Endothelial cell of umbilical vein (primary cell): ENCODE measurements at regions of chr22 and their contacts with region 1.

Region 1: DNA sequence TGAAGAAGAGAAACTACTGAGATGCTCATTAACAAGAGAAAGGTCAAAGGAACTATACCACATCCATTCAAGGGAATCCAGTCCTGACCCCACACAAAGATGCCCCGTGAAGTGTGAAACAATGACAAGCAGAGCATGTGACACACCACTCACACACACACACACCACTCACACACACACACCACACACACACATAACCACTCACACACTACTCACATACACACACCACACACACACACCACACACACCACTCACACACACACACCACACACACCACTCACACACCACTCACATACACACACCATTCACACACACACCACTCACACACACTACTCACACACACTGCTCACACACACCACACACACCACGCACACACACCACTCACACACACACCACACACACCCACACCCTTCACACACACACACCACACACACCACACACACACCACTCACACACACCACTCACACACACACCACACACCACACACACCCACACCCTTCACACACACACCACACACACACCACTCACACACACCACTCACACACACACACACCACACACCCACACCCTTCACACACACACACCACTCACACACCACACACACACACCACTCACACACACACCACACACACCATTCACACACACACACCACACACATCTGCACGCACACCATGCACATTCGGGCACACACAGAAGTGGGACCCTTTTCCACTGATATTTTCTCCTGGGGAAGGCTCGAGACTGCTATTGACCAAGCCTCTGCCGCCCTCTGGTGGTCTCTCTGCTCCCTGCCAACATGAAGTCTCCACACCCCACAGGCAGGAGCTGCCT is 32.0 kb upstream of the COMT start:
- DNase-seq: peak; percentile 77
- H3K4me3 ChIP-seq: no peak overlapping the region
- H3K27ac ChIP-seq: no peak overlapping the region
- H3K4me1 ChIP-seq: peaks cover 3% of the 10 kb centered on the region
- H3K27me3 ChIP-seq: no peaks in the 10 kb centered on the region
- CTCF ChIP-seq: peak; percentile 86 to 88
- POLR2A ChIP-seq: no peak

Region 2: GRCh38 chr22:19723983-19724827 is 185.4 kb before region 1 on chr22:
- CTCF ChIA-PET with region 1: interaction called, 372 read pairs
- POLR2A ChIA-PET with region 1: no interaction called
- dilution Hi-C with region 1: no loop called
- intact Hi-C with region 1: no loop called
- DNase-seq: peak; percentile 70
- H3K4me3 ChIP-seq: peak overlapping the region in 2 of 3 experiments; percentile 16 to 22
- H3K27ac ChIP-seq: no peak overlapping the region
- H3K4me1 ChIP-seq: no peaks in the 10 kb centered on the region
- H3K27me3 ChIP-seq: peaks cover 0 to 2% of the 10 kb centered on the region in 2 experiments
- CTCF ChIP-seq: peak; percentile 57 to 64
- POLR2A ChIP-seq: no peak

Region 3: GRCh38 chr22:19766511-19767426 is 142.8 kb before region 1 on chr22:
- CTCF ChIA-PET with region 1: interaction called, 15 read pairs
- POLR2A ChIA-PET with region 1: no interaction called
- dilution Hi-C with region 1: no loop called
- intact Hi-C with region 1: loop called (anchors 5 kb)
- DNase-seq: no peak
- H3K4me3 ChIP-seq: no peak overlapping the region
- H3K27ac ChIP-seq: no peak overlapping the region
- H3K4me1 ChIP-seq: peaks cover 5% of the 10 kb centered on the region
- H3K27me3 ChIP-seq: peaks cover 11 to 19% of the 10 kb centered on the region in 2 experiments
- CTCF ChIP-seq: peak; percentile 33 to 39
- POLR2A ChIP-seq: no peak

Region 4: DNA sequence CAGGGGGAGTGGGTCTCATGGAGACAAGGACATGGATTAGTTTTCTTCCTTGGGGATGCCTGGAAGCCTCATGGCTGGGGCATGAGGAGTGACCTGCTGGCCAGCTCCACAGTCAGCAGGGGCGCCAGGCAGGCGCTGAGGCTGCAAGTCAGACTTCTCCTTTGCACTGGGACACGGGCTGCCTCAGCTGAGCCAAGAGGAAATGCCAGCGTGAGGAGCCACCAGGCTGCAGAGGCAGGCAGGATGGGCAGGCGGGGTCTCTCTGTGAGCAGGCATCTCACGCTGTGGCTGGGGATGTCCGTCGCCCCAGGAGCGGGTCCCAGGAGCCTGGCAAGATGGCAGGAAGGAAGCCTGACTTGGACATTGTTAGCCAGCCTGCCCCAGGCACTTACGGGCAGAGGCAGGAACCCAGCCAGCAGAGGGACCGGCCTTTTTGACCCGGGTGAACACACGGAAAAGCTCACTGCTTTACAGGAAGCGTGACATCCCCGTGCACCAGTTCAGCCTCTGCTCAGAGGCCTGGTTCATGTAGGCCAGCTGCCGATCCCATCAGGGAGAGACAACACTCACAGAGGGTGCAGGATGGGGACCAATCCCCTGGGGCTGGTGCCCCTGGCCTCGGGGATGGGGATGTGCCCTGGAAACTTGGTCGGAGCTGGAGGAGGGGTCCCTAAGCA is 65.0 kb before region 1 on chr22:
- CTCF ChIA-PET with region 1: interaction called, 11 read pairs
- POLR2A ChIA-PET with region 1: no interaction called
- dilution Hi-C with region 1: no loop called
- intact Hi-C with region 1: no loop called
- DNase-seq: peak; percentile 77
- H3K4me3 ChIP-seq: no peak overlapping the region
- H3K27ac ChIP-seq: peak overlapping the region; percentile 80
- H3K4me1 ChIP-seq: peaks cover 32% of the 10 kb centered on the region
- H3K27me3 ChIP-seq: no peaks in the 10 kb centered on the region
- CTCF ChIP-seq: peak; percentile 17 to 39
- POLR2A ChIP-seq: no peak

Region 5: GRCh38 chr22:19874307-19875060 is 35.1 kb before region 1 on chr22:
- CTCF ChIA-PET with region 1: interaction called, 23 read pairs
- POLR2A ChIA-PET with region 1: no interaction called
- dilution Hi-C with region 1: no loop called
- intact Hi-C with region 1: loop called (anchors 2 kb)
- DNase-seq: peak; percentile 77
- H3K4me3 ChIP-seq: no peak overlapping the region
- H3K27ac ChIP-seq: peak overlapping the region; percentile 77
- H3K4me1 ChIP-seq: peaks cover 54% of the 10 kb centered on the region
- H3K27me3 ChIP-seq: no peaks in the 10 kb centered on the region
- CTCF ChIP-seq: no peak
- POLR2A ChIP-seq: peak; percentile 35

Region 6: DNA sequence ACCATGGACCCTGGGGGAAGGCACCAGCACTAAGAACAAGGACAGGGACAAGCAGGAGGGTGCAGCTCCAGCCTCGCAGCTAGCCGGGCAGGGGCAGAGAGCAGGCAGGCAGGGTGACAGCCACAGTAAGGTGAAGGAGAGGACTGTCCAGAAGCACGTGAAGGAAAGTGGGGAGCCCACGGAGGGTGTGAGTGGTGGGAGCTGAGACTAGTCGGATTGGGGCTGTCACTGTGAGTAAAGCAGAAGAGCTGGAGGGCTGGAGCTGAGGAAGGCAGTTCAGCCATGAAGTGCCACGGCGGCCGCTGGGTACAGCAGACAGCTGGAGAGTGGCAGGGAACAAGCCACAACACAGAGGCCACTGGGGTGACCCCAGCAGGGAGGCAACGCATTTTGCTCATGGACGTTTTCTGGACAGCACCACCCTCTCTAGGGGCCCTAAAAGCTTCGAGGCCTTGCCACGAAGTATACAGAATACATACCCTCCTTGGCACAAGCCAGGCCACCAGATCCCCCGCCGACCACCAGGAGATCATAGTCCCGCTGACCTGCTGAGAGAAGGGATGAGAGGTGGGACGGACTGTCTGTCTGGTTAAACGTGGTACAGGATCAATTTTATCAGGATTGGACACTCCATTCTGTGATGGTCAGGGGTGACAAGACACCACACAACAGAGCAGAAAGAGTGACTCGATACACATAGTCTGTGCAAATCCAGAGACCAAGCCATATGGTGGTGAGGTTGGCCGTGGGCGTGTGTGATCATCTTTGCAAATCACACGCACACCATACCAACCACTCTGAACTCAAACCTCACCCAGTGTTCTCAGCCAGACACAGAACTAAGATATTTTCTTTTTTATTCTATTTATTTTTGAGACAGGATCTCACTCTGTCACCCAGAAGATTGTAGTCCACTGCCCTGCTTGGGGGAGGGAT is 21.3 kb after region 1 on chr22:
- CTCF ChIA-PET with region 1: interaction called, 11 read pairs
- POLR2A ChIA-PET with region 1: no interaction called
- dilution Hi-C with region 1: no loop called
- intact Hi-C with region 1: no loop called
- DNase-seq: no peak
- H3K4me3 ChIP-seq: no peak overlapping the region
- H3K27ac ChIP-seq: no peak overlapping the region
- H3K4me1 ChIP-seq: no peaks in the 10 kb centered on the region
- H3K27me3 ChIP-seq: no peaks in the 10 kb centered on the region
- CTCF ChIP-seq: no peak
- POLR2A ChIP-seq: no peak

Region 7: GRCh38 chr22:19995626-19996335 is 86.2 kb after region 1 on chr22:
- CTCF ChIA-PET with region 1: no interaction called
- POLR2A ChIA-PET with region 1: no interaction called
- dilution Hi-C with region 1: no loop called
- intact Hi-C with region 1: no loop called
- DNase-seq: peak; percentile 28
- H3K4me3 ChIP-seq: no peak overlapping the region
- H3K27ac ChIP-seq: no peak overlapping the region
- H3K4me1 ChIP-seq: peaks cover 23% of the 10 kb centered on the region
- H3K27me3 ChIP-seq: no peaks in the 10 kb centered on the region
- CTCF ChIP-seq: no peak
- POLR2A ChIP-seq: no peak